Right cardiac atrium (tissue), 5 donors: ENCODE measurements at regions of chr20 and their contacts with region 1.

Region 1: DNA sequence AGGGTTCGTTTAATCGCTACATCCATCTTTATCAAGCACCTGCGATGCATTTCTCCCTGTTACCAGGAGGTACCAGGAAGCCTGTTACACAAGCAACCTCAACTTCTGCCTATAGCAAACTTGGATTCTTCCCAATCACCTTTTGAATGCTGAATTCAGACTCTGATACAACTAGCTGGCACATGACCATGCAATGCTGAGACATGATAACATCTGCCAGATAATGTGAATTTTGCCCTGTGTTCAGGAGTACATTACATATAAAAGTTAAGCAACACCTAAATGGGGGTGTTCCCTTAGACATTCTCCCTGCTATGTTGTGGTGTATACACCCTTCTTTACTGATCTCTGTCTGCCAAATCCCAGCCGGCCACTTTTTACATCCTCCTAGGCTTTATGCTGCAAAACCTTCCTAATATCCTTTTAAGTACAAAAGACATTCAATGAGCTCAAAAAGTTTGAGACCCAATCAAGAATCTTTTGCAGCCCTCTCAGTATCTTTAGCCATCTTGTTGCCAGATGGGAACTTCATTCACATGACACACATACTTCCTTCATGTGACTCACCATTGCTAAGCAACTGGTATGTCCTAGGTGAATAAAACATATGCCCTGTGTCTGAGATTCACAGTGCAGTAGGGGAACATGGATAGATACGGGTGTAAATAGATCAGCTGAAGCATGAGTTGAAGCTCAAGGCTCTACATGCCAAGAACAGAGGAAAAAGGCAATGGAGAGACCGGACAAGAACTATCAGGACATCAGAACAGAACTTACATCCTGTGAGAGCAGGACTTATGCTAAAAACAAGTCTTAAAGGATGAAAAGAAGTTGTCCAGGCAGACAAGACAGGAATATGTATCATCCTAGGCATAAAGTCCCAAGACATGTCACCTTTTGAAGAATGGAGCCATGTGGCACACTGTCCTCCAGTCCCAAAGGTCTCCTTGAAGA is 84.3 kb downstream of the ZHX3 start:
- DNase-seq: no peak
- ATAC-seq: peak; percentile 14 to 53
- H3K4me3 ChIP-seq: no peak overlapping the region
- H3K27ac ChIP-seq: peak overlapping the region; percentile 90
- H3K4me1 ChIP-seq: peaks cover 20% of the 10 kb centered on the region
- H3K27me3 ChIP-seq: no peaks in the 10 kb centered on the region

Region 2: GRCh38 chr20:41173161-41173721 is 60.0 kb before region 1 on chr20:
- intact Hi-C with region 1: loop called in 3 of 4 experiments (anchors 2 to 5 kb)
- DNase-seq: peak; percentile 88 to 95 (median 95)
- ATAC-seq: peak; percentile 86 to 90
- H3K4me3 ChIP-seq: no peak overlapping the region
- H3K27ac ChIP-seq: peak overlapping the region; percentile 40
- H3K4me1 ChIP-seq: peaks cover 22% of the 10 kb centered on the region
- H3K27me3 ChIP-seq: no peaks in the 10 kb centered on the region

Region 3: GRCh38 chr20:41182296-41183212 is 50.7 kb before region 1 on chr20:
- intact Hi-C with region 1: loop called in 2 of 4 experiments (anchors 5 kb)
- DNase-seq: peak in 1 of 3 donors; percentile 32
- ATAC-seq: no peak
- H3K4me3 ChIP-seq: no peak overlapping the region
- H3K27ac ChIP-seq: no peak overlapping the region
- H3K4me1 ChIP-seq: peaks cover 12% of the 10 kb centered on the region
- H3K27me3 ChIP-seq: no peaks in the 10 kb centered on the region

Region 4: GRCh38 chr20:41722236-41722635 is 489.0 kb after region 1 on chr20:
- intact Hi-C with region 1: no loop called
- DNase-seq: no peak
- ATAC-seq: no peak
- H3K4me3 ChIP-seq: no peak overlapping the region
- H3K27ac ChIP-seq: no peak overlapping the region
- H3K4me1 ChIP-seq: no peaks in the 10 kb centered on the region
- H3K27me3 ChIP-seq: no peaks in the 10 kb centered on the region